ENCODE measurements at regions of chr2 and their contacts with region 1.

Region 1: DNA sequence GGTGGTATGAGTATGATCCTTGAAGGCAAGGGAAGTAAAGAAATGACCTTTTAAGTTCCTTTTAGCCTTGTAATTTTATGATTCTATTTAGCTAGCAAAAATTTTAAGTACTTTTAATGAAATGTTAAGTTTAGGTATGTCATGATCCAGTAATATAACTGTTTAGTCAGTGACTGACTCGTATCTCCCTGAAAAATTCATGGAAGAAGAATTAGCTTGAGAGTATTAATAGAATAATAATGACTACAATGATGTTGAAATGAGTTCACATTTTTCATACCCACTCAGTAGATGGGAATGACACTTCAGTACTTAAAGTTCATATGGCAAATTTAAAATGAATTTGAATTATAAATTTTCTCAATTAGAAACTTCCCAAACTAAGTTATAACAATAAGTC is 14.6 kb downstream of the RAB3GAP1 start:
- DNase-seq: no peak
- ATAC-seq: no peak
- H3K4me3 ChIP-seq: no peak overlapping the region
- H3K4me3 Mint-ChIP-seq: no peak overlapping the region
- H3K27ac ChIP-seq: no peak overlapping the region
- H3K27ac Mint-ChIP-seq: no peak overlapping the region
- H3K4me1 ChIP-seq: peaks cover 0 to 2% of the 10 kb centered on the region in 2 experiments
- H3K4me1 Mint-ChIP-seq: peaks cover 56 to 61% (median 58%) of the 10 kb centered on the region in 3 donors
- H3K27me3 ChIP-seq: no peaks in the 10 kb centered on the region
- H3K27me3 Mint-ChIP-seq: no peaks in the 10 kb centered on the region

Region 2: GRCh38 chr2:135825550-135826176 is 759.0 kb after region 1 on chr2:
- CTCF ChIA-PET with region 1: interaction called in 1 of 2 experiments, 6 read pairs
- POLR2A ChIA-PET with region 1: interaction called in 1 of 2 experiments, 12 read pairs
- DNase-seq: no peak
- ATAC-seq: no peak
- H3K4me3 ChIP-seq: no peak overlapping the region
- H3K4me3 Mint-ChIP-seq: no peak overlapping the region
- H3K27ac ChIP-seq: no peak overlapping the region
- H3K27ac Mint-ChIP-seq: no peak overlapping the region
- H3K4me1 ChIP-seq: peaks cover under 1 to 11% of the 10 kb centered on the region in 2 experiments
- H3K4me1 Mint-ChIP-seq: peaks cover 5 to 8% (median 5%) of the 10 kb centered on the region in 3 donors
- H3K27me3 ChIP-seq: no peaks in the 10 kb centered on the region
- H3K27me3 Mint-ChIP-seq: no peaks in the 10 kb centered on the region